ENCODE measurements at regions of chr1 and their contacts with region 1.

Region 1: DNA sequence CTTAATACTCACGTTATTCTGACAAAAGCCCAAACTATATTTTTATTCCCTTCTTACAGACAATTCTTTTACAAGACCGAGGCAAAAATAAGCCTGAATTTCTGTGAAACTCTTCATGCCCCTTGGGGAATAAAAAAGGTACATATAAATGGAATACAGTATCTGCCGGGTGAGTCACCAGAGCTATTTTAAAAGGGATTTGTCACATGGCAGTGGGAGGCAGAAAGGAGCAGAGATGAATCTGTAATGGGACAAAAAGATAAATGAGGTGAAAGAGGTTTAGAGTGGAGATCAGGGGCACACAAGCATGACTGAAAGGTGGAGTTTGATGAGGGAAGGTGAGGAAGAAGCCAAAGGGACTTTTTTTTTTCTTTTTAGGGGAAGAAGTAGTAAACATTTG is 8.8 kb downstream of the XCL1 start:
- DNase-seq: no peak
- H3K4me3 ChIP-seq: no peak overlapping the region
- H3K27ac ChIP-seq: no peak overlapping the region
- H3K4me1 ChIP-seq: no peaks in the 10 kb centered on the region
- H3K27me3 ChIP-seq: no peaks in the 10 kb centered on the region
- CTCF ChIP-seq: no peak
- POLR2A ChIP-seq: no peak

Region 2: DNA sequence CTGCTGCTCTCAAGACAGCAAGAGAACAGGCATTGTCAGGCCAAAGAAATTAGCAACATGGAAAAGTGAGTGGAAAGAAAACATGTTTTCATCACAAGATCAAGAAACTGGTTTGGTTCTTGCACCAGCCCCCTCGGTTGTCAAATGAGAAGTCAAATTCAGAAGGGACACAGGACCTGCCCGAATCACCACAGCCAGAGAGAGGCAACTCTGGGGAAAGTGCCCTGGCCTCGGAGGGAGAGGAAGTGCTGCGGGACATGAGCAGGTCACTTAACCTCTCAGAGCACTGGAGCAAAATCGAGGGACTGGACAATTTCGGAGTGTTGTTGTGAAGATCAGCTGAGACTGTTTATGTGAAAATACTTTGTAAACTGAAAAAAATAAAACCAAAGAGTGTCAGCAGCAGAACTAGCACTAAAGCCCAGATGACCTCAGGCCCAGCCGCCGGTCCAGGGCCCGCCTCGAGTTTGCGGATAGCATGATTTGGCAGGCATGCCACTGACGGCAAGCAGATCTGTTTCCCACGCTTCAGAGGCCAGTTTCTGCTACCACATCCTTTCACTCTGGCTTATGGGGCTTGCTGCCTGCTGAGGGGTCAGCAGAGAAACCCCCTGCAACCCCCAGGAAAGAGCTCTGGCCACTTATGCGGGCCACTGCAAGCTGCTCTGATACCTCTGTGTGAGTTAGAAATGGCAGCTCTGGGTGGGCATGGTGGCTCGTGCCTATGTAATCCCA is 1098.9 kb before region 1 on chr1:
- intact Hi-C with region 1: no loop called
- DNase-seq: no peak
- H3K4me3 ChIP-seq: no peak overlapping the region
- H3K27ac ChIP-seq: no peak overlapping the region
- H3K4me1 ChIP-seq: no peaks in the 10 kb centered on the region
- H3K27me3 ChIP-seq: no peaks in the 10 kb centered on the region
- CTCF ChIP-seq: no peak
- POLR2A ChIP-seq: no peak

Region 3: GRCh38 chr1:168136709-168137514 is 448.3 kb before region 1 on chr1 and contains the start of gene GPR161:
- intact Hi-C with region 1: no loop called
- DNase-seq: no peak
- H3K4me3 ChIP-seq: peak within 1 kb of the TSS; percentile 65 to 80 (median 79)
- H3K27ac ChIP-seq: peak within 1 kb of the TSS; percentile 62 to 83
- H3K4me1 ChIP-seq: no peaks in the 10 kb centered on the region
- H3K27me3 ChIP-seq: no peaks in the 10 kb centered on the region
- CTCF ChIP-seq: no peak
- POLR2A ChIP-seq: no peak
- total RNA-seq, gene GPR161: 2.8 to 5.6 (median 4.5) TPM

Region 4: GRCh38 chr1:168607872-168608428 is 22.8 kb after region 1 on chr1:
- intact Hi-C with region 1: loop called (anchors 1 kb)
- DNase-seq: no peak
- H3K4me3 ChIP-seq: no peak overlapping the region
- H3K27ac ChIP-seq: peak overlapping the region in 1 of 2 donors; percentile 75
- H3K4me1 ChIP-seq: peaks cover 4 to 11% of the 10 kb centered on the region in 2 donors
- H3K27me3 ChIP-seq: no peaks in the 10 kb centered on the region
- CTCF ChIP-seq: no peak
- POLR2A ChIP-seq: no peak

Measured in breast epithelium (tissue), 4 donors.